Endothelial cell of umbilical vein (primary cell): ENCODE measurements at regions of chr4 and their contacts with region 1.

Region 1: GRCh38 chr4:1289207-1290164 is at the start of gene MAEA:
- DNase-seq: peak; percentile 98
- H3K4me3 ChIP-seq: peak within 1 kb of the TSS; percentile 84 to 87 (median 86)
- H3K27ac ChIP-seq: peak within 1 kb of the TSS; percentile 67
- H3K4me1 ChIP-seq: peaks cover 16% of the 10 kb centered on the region
- H3K27me3 ChIP-seq: no peaks in the 10 kb centered on the region
- CTCF ChIP-seq: no peak
- POLR2A ChIP-seq: peak; percentile 96
- total RNA-seq, gene MAEA: 66.0 and 66.6 TPM in 2 replicates

Region 2: GRCh38 chr4:1072830-1073446 is 216.5 kb before region 1 on chr4:
- CTCF ChIA-PET with region 1: no interaction called
- POLR2A ChIA-PET with region 1: no interaction called
- dilution Hi-C with region 1: no loop called
- intact Hi-C with region 1: no loop called
- DNase-seq: peak; percentile 79
- H3K4me3 ChIP-seq: no peak overlapping the region
- H3K27ac ChIP-seq: no peak overlapping the region
- H3K4me1 ChIP-seq: peaks cover 2% of the 10 kb centered on the region
- H3K27me3 ChIP-seq: peaks cover 2 to 6% of the 10 kb centered on the region in 2 experiments
- CTCF ChIP-seq: peak; percentile 73 to 86
- POLR2A ChIP-seq: no peak

Region 3: DNA sequence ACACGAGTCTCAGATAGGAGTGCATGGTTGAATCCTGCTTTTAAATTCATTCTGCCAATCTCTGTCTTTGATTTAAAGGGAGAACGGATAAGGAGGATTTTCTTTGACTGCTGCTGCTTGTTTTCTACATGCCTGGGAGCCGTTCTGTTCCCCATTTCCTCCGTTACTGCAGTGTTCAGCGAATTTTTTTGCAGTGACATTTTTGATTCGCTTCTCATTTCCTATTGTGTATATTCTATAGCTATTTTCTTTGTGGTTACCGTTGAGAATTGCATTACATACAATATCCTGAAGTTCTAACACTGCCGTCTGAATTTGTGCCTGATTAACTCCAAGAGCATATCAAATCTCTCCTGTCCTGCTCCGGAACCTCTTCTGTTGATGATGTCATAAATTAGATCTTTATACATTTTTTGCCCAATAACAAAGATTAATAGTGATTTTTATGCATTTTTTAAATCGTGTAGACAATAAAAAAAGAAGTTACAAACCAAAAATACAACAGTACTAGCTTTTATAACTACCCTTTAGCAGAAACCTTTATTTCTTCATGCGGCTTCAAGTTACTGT is 14.5 kb before region 1 on chr4:
- CTCF ChIA-PET with region 1: no interaction called
- POLR2A ChIA-PET with region 1: no interaction called
- dilution Hi-C with region 1: no loop called
- intact Hi-C with region 1: no loop called
- DNase-seq: no peak
- H3K4me3 ChIP-seq: no peak overlapping the region
- H3K27ac ChIP-seq: no peak overlapping the region
- H3K4me1 ChIP-seq: no peaks in the 10 kb centered on the region
- H3K27me3 ChIP-seq: no peaks in the 10 kb centered on the region
- CTCF ChIP-seq: no peak
- POLR2A ChIP-seq: no peak

Region 4: DNA sequence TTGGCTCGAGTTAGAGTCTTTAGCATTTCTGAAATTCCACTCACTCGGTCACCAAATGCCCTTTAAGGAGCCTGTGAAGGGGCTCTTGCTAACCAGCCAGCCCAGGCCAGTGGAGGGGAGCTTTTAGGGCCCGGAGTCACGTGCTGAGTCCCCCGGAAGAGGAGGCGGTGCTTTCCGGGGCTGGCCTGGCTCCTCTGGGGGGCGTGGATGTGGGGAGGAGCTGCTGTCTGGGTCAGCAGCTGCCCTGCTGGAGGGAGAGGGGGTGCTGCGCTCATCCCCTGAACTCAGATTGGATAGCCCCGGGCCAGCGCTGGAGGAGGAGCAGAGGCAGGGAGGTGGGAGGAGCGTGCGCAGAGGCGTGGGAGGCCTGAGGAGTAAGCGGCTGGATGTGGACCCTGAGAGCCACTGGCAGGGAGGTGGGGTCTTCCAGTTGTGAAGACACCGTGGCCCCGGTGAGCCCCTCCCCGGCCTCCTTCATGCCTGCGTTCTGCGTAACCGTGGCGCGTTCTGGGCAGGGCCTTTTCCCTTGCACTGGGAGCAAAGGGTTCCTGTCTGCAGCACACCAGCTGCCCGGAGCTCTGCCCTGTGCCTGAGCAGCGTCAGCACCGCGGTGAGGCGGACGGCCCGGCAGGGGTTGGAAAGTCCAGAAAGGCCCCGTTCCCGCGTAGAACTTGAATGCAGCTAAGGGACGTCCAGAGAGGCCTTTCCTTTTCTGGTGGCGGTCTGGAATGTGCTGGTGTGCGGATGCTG is 19.9 kb after region 1 on chr4:
- CTCF ChIA-PET with region 1: interaction called, 3 read pairs
- POLR2A ChIA-PET with region 1: no interaction called
- dilution Hi-C with region 1: no loop called
- intact Hi-C with region 1: loop called (anchors 1 kb)
- DNase-seq: peak; percentile 82
- H3K4me3 ChIP-seq: peak overlapping the region in 1 of 3 experiments; percentile 42
- H3K27ac ChIP-seq: no peak overlapping the region
- H3K4me1 ChIP-seq: peaks cover 11% of the 10 kb centered on the region
- H3K27me3 ChIP-seq: no peaks in the 10 kb centered on the region
- CTCF ChIP-seq: no peak
- POLR2A ChIP-seq: no peak

Region 5: DNA sequence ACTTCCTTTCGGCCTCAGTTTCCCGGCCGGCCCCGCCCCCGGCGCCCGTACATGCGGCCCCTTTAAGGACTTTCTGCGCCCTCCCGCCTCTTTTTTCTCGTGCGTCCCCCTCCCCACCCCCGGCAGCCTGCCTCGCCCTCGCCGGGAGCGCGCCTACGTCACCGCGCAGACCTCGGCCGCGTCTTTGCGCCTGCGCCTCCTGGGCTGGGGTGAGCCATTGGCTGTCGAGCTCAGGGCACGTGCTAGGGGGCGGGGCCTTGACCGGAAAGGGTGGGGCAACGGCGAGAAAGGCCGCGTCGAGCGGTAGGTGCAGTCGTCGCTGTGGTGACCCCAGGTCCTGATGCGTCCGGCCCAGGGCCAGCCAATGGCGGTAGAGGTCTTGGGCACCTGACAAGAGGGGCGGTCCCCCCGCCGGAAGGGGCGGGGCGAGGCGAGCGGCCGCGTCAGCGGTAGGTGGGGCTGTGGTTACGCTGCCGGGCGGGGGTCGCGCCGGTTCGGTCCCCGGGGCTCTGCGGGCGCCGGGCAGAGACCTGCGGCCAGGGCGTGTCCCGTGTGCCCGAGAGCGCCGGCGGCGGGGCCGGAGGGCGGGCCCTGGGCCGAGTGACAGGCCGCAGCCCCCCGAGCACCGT is 57.4 kb after region 1 on chr4 and contains the start of gene UVSSA:
- CTCF ChIA-PET with region 1: interaction called, 10 read pairs
- POLR2A ChIA-PET with region 1: no interaction called
- dilution Hi-C with region 1: no loop called
- intact Hi-C with region 1: loop called (anchors 1 kb)
- DNase-seq: peak; percentile 100
- H3K4me3 ChIP-seq: peak within 1 kb of the TSS; percentile 69 to 76 (median 75)
- H3K27ac ChIP-seq: peak within 1 kb of the TSS; percentile 82
- H3K4me1 ChIP-seq: peaks cover 22% of the 10 kb centered on the region
- H3K27me3 ChIP-seq: no peaks in the 10 kb centered on the region
- CTCF ChIP-seq: no peak
- POLR2A ChIP-seq: no peak
- total RNA-seq, gene UVSSA: 14.9 and 16.4 TPM in 2 replicates